ENCODE measurements at regions of chr10 and their contacts with region 1.

Region 1: GRCh38 chr10:130110246-130111112 is at the start of gene C10orf143:
- DNase-seq: peak; percentile 94
- H3K4me3 ChIP-seq: peak within 1 kb of the TSS; percentile 97
- H3K27ac ChIP-seq: peak within 1 kb of the TSS; percentile 89
- H3K27me3 ChIP-seq: no peaks in the 10 kb centered on the region
- CTCF ChIP-seq: no peak
- polyA plus RNA-seq, gene C10orf143: 1.7 and 1.9 TPM in 2 replicates

Region 2: GRCh38 chr10:129898706-129899268 is 211.7 kb before region 1 on chr10:
- CTCF ChIA-PET with region 1: no interaction called
- POLR2A ChIA-PET with region 1: no interaction called
- DNase-seq: no peak
- H3K4me3 ChIP-seq: no peak overlapping the region
- H3K27ac ChIP-seq: no peak overlapping the region
- H3K27me3 ChIP-seq: peaks cover 7% of the 10 kb centered on the region
- CTCF ChIP-seq: no peak

Region 3: DNA sequence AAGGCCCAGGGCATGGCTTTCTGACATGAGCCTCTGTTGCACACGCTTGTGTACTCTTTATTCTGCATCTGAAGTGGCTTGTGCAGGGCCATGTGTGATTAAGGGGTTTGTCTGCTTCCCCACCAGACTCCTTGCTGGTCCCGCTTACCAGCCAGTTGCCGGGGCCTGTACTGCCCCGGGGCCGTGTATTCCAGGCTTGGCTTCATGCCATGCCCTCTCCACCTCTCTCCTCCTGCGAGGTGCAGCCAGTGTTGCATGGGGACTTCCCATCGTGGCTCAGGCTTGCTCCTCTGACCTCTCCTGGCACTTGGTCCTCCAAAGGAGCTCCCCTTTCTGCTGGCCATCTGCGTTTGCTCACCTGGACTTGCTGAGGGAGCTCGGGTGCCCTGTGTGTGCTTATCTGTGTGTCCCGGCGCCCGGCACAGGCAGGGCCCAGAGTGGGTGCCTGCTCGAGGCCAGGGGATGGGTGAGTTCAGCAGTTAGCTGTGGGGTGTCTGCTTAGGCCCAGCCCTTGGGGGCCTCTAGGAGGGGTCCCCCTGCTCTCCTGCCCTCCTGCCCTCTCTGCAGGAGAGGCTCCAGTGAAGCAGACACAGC is 11.1 kb after region 1 on chr10:
- CTCF ChIA-PET with region 1: interaction called, 59 read pairs
- POLR2A ChIA-PET with region 1: interaction called, 3 read pairs
- DNase-seq: no peak
- H3K4me3 ChIP-seq: no peak overlapping the region
- H3K27ac ChIP-seq: no peak overlapping the region
- H3K27me3 ChIP-seq: no peaks in the 10 kb centered on the region
- CTCF ChIP-seq: no peak

Region 4: DNA sequence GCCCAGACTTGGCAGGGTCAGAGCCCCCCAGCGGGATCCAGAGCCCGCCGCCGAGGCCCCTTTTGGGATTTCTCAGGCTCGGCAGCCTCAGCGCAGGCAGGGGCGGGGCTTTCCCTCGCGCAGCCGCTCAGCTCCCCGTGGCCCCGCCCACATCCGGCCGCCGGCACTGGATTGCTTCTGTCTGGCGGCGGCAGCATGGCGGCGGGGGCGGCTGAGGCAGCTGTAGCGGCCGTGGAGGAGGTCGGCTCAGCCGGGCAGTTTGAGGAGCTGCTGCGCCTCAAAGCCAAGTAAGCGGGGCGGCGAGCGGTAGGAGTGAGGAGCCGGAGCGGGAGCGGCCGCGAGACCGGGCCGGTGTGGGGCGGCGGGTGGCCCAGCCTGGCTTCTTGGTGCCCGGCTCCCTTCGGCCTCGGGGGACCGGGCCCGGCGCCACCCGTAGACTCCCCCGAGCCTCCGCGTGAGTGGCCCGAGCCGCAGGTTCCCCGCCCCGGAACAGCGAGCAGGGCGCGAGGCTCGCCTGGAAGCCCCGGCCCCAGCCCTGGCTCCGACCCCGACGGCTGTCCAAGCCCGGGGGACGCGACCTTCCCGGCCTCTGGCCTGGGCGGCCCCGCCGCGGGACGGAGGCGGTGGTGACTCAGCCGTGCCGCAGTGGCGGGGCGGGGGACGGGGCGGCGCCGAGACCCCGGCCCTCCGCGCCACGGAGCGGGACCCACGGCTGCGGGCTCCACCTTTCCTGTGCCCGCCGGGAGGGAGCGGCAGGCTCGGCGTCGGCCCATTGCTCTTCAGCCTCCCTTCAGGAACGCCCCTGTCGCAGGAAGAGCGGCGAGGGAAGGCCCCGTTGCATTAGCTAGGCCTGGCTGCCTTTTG is 26.0 kb after region 1 on chr10 and contains the start of gene GLRX3:
- CTCF ChIA-PET with region 1: interaction called, 45 read pairs
- POLR2A ChIA-PET with region 1: interaction called, 93 read pairs
- DNase-seq: no peak
- H3K4me3 ChIP-seq: peak within 1 kb of the TSS; percentile 81
- H3K27ac ChIP-seq: peak within 1 kb of the TSS; percentile 21
- H3K27me3 ChIP-seq: no peaks in the 10 kb centered on the region
- CTCF ChIP-seq: no peak
- polyA plus RNA-seq, gene GLRX3: 91.0 and 126 TPM in 2 replicates

Region 5: DNA sequence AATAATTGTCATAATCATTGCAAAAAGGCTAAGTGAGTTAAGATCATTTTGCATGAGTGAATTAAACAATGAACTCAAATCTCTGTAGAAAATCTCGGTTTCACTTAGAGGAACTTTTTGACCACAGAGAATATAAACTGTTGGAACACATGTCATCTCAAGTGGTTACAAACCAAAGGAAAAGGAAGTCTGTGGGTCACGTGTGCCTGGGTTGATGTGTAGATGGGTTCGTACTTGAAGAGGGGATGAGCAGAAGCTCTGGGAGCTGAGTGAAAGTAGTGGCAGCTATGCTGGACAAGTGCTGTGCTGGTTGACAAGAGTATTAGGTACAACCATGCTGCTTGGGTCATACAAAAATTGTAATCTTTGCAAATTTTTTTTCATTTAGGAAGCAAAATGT is 60.7 kb after region 1 on chr10:
- CTCF ChIA-PET with region 1: interaction called, 13 read pairs
- POLR2A ChIA-PET with region 1: no interaction called
- DNase-seq: no peak
- H3K4me3 ChIP-seq: no peak overlapping the region
- H3K27ac ChIP-seq: no peak overlapping the region
- H3K27me3 ChIP-seq: no peaks in the 10 kb centered on the region
- CTCF ChIP-seq: no peak

Measured in AG04450 (cell line).